ENCODE measurements at regions of chr5 and their contacts with region 1.

Region 1: GRCh38 chr5:132419502-132420468 is 50.3 kb downstream of the SLC22A5 start:
- DNase-seq: peak; percentile 67 to 80 (median 70)
- H3K4me3 ChIP-seq: peak overlapping the region in 1 of 3 experiments; percentile 17
- H3K4me3 Mint-ChIP-seq: peak overlapping the region in 1 of 2 donors; percentile 67
- H3K27ac ChIP-seq: peak overlapping the region; percentile 13 to 99
- H3K27ac Mint-ChIP-seq: peak overlapping the region; percentile 80 to 92 (median 88)
- H3K4me1 ChIP-seq: peaks cover 78 to 89% of the 10 kb centered on the region in 2 donors
- H3K4me1 Mint-ChIP-seq: peaks cover 93% of the 10 kb centered on the region
- H3K27me3 ChIP-seq: no peaks in the 10 kb centered on the region
- H3K27me3 Mint-ChIP-seq: peaks cover 0 to 2% (median 1%) of the 10 kb centered on the region in 3 donors
- CTCF ChIP-seq: peak; percentile 92

Region 2: DNA sequence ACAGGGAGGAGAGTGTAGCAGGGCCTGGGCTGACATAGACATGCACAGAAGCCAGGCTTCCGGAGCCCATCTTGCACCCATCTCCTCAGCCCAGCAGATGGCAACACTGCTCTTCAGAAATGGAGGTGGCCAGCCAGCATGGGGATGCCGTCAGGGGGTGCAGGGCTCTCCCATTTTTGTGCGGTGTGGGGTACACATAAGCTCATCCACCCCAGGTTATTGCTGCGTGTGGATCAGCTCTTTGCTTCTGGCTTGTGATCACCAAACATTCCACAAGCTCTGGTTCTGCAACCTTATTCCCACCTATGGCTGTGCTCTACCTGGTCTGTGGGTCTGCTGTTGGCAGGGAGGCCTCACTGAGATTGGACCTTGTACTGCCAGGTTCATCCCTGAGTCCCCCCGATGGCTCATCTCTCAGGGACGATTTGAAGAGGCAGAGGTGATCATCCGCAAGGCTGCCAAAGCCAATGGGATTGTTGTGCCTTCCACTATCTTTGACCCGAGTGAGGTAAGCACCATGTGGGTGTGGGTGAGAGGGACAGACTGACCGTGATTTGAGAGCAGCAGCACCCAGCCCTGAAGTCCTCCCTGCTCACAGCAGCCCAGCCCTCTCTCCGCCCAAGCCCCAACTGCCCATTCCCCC is 33.0 kb before region 1 on chr5:
- intact Hi-C with region 1: no loop called
- DNase-seq: peak; percentile 65 to 81 (median 72)
- H3K4me3 ChIP-seq: peak overlapping the region in 1 of 3 experiments; percentile 37
- H3K4me3 Mint-ChIP-seq: no peak overlapping the region
- H3K27ac ChIP-seq: peak overlapping the region in 1 of 2 donors; percentile 79
- H3K27ac Mint-ChIP-seq: peak overlapping the region; percentile 37 to 97 (median 91)
- H3K4me1 ChIP-seq: peaks cover 39 to 47% of the 10 kb centered on the region in 2 donors
- H3K4me1 Mint-ChIP-seq: peaks cover 42% of the 10 kb centered on the region
- H3K27me3 ChIP-seq: no peaks in the 10 kb centered on the region
- H3K27me3 Mint-ChIP-seq: no peaks in the 10 kb centered on the region
- CTCF ChIP-seq: peak; percentile 87

Region 3: DNA sequence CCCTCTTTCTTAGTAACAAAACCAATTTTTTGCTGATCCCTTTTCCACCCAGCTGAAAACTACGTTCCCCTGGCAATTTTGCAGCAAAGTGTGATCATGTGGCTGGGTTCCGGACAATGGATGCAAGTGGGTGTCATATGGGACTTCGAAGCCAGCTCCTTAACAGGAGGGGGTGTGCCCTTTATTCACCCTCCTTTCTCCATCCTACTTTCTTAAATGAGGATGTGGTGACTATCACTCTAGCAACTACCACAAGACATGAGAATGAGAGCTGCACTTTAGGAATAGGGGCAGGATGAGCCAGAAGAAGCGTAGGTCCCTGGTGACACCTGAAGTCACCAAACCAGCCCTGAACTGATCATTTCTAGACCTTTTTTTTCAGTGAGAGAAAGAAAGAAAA is 11.8 kb after region 1 on chr5:
- intact Hi-C with region 1: loop called in 1 of 2 experiments (anchors 2 kb)
- DNase-seq: peak in 2 of 3 donors; percentile 52 to 58
- H3K4me3 ChIP-seq: peak overlapping the region in 1 of 3 experiments; percentile 11
- H3K4me3 Mint-ChIP-seq: no peak overlapping the region
- H3K27ac ChIP-seq: peak overlapping the region in 1 of 2 donors; percentile 50
- H3K27ac Mint-ChIP-seq: peak overlapping the region; percentile 72 to 97 (median 90)
- H3K4me1 ChIP-seq: peaks cover 94 to 97% of the 10 kb centered on the region in 2 donors
- H3K4me1 Mint-ChIP-seq: peaks cover 93% of the 10 kb centered on the region
- H3K27me3 ChIP-seq: no peaks in the 10 kb centered on the region
- H3K27me3 Mint-ChIP-seq: peaks cover 0 to 2% (median 0%) of the 10 kb centered on the region in 3 donors
- CTCF ChIP-seq: no peak

Measured in CD14-positive monocyte (primary cell).